ENCODE measurements at regions of chr22 and their contacts with region 1.

Region 1: GRCh38 chr22:33803371-33804282 is 116.6 kb downstream of the LARGE1 start:
- DNase-seq: peak; percentile 71
- H3K4me3 ChIP-seq: no peak overlapping the region
- H3K27ac ChIP-seq: peak overlapping the region; percentile 54 to 87 (median 79)
- H3K4me1 ChIP-seq: peaks cover 0 to 70% (median 69%) of the 10 kb centered on the region in 4 donors
- H3K27me3 ChIP-seq: no peaks in the 10 kb centered on the region
- CTCF ChIP-seq: no peak
- EP300 ChIP-seq: peak; percentile 31 to 80 (median 58)
- POLR2A ChIP-seq: no peak

Region 2: GRCh38 chr22:33658775-33659174 is 144.9 kb before region 1 on chr22:
- intact Hi-C with region 1: loop called (anchors 2 kb)
- DNase-seq: peak; percentile 81
- H3K4me3 ChIP-seq: no peak overlapping the region
- H3K27ac ChIP-seq: peak overlapping the region; percentile 46 to 72 (median 56)
- H3K4me1 ChIP-seq: peaks cover 0 to 50% (median 34%) of the 10 kb centered on the region in 4 donors
- H3K27me3 ChIP-seq: no peaks in the 10 kb centered on the region
- CTCF ChIP-seq: no peak
- EP300 ChIP-seq: peak in 1 of 4 donors; percentile 8
- POLR2A ChIP-seq: no peak

Region 3: DNA sequence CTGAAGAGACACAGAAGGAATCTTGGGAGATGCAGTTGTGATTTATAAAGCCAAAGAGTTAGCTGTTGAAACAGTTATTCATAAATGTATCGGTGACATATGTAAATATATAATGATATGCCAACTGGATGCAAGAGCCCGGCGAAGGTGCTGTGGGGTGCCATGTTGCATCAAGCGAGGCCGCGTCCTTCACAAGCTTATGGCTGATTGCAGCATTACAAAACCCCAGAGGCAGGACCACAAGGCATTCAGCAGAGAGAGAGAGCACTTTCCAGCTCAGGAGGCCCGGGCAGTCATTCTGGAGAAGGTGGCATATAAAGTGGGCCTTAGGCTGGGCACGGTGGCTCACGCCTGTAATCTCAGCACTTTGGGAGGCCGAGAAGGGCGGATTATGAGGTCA is 51.1 kb after region 1 on chr22:
- intact Hi-C with region 1: loop called (anchors 5 kb)
- DNase-seq: no peak
- H3K4me3 ChIP-seq: no peak overlapping the region
- H3K27ac ChIP-seq: peak overlapping the region in 1 of 4 donors; percentile 74
- H3K4me1 ChIP-seq: peaks cover 0 to 43% (median 33%) of the 10 kb centered on the region in 4 donors
- H3K27me3 ChIP-seq: no peaks in the 10 kb centered on the region
- CTCF ChIP-seq: no peak
- EP300 ChIP-seq: no peak
- POLR2A ChIP-seq: no peak

Region 4: GRCh38 chr22:33867115-33867866 is 63.7 kb after region 1 on chr22:
- intact Hi-C with region 1: no loop called
- DNase-seq: no peak
- H3K4me3 ChIP-seq: no peak overlapping the region
- H3K27ac ChIP-seq: peak overlapping the region; percentile 71 to 84 (median 76)
- H3K4me1 ChIP-seq: peaks cover 0 to 79% (median 57%) of the 10 kb centered on the region in 4 donors
- H3K27me3 ChIP-seq: no peaks in the 10 kb centered on the region
- CTCF ChIP-seq: no peak
- EP300 ChIP-seq: no peak
- POLR2A ChIP-seq: no peak